Adrenal gland (tissue), 19 donors: ENCODE measurements at regions of chr7 and their contacts with region 1.

Region 1: GRCh38 chr7:39465055-39465929 is 100.9 kb upstream of the YAE1 start:
- DNase-seq: peak; percentile 40 to 72 (median 61)
- H3K4me3 ChIP-seq: no peak overlapping the region
- H3K27ac ChIP-seq: no peak overlapping the region
- H3K4me1 ChIP-seq: peaks cover 0 to 6% of the 10 kb centered on the region in 2 donors
- H3K27me3 ChIP-seq: peaks cover 3% of the 10 kb centered on the region
- CTCF ChIP-seq: peak; percentile 61 to 80 (median 70)
- POLR2A ChIP-seq: no peak

Region 2: GRCh38 chr7:38932509-38933168 is 532.7 kb before region 1 on chr7:
- intact Hi-C with region 1: loop called in 1 of 2 experiments (anchors 10 kb)
- DNase-seq: peak; percentile 54 to 74 (median 67)
- H3K4me3 ChIP-seq: no peak overlapping the region
- H3K27ac ChIP-seq: no peak overlapping the region
- H3K4me1 ChIP-seq: no peaks in the 10 kb centered on the region
- H3K27me3 ChIP-seq: no peaks in the 10 kb centered on the region
- CTCF ChIP-seq: peak; percentile 58 to 92 (median 68)
- POLR2A ChIP-seq: no peak